SK-N-SH (cell line): ENCODE measurements at regions of chr2 and their contacts with region 1.

Region 1: DNA sequence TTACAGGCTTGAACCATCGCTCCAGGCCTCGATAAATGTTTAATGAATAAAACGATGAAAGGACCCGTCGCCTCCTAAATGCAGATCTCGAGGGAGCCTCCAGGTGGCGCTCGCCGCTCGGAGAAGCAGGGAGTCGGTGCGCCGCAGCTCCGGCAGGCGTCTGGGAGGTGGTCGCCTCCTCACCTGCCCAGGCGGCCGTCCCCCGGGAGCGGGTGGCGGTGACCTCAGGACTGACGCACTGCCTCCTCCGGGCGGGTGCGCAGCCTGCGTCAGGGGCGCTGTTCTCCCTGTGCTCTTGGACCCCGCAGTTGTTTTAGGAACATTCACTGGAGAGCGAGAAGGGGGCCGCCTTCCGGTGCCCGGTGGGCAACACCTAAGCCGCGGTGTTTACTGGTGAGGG is 38.6 kb upstream of the POLE4 start:
- DNase-seq: peak; percentile 86
- H3K4me3 ChIP-seq: peak overlapping the region; percentile 42 to 58
- H3K27ac ChIP-seq: no peak overlapping the region
- H3K4me1 ChIP-seq: no peaks in the 10 kb centered on the region; a peak in 1 of 4 replicates
- H3K27me3 ChIP-seq: no peaks in the 10 kb centered on the region
- CTCF ChIP-seq: peak; percentile 75
- EP300 ChIP-seq: no peak
- RAD21 ChIP-seq: peak; percentile 90

Region 2: DNA sequence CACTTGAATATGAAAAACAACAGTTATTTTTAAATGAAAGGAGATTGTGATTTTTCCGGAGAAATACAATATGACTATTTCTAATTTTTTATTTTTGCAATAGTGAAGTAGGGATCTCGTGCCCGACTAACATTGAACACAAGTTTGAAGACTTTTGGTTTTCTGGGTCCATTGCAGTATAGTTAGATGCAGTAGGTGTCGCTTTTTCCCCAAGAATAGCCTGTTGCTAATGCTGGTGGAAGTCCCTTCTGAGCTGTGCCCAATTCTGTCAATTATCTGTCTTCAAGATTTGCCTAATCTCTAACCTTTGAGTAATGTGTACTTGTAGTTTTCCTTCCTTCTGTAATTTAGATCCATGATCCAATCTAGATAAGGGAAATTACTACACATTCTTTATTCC is 229.3 kb before region 1 on chr2:
- CTCF ChIA-PET with region 1: interaction called, 10 read pairs
- POLR2A ChIA-PET with region 1: no interaction called
- DNase-seq: peak; percentile 68
- H3K4me3 ChIP-seq: no peak overlapping the region
- H3K27ac ChIP-seq: no peak overlapping the region
- H3K4me1 ChIP-seq: no peaks in the 10 kb centered on the region; a peak in 1 of 4 replicates
- H3K27me3 ChIP-seq: no peaks in the 10 kb centered on the region
- CTCF ChIP-seq: peak; percentile 92
- EP300 ChIP-seq: no peak
- RAD21 ChIP-seq: peak; percentile 98

Region 3: DNA sequence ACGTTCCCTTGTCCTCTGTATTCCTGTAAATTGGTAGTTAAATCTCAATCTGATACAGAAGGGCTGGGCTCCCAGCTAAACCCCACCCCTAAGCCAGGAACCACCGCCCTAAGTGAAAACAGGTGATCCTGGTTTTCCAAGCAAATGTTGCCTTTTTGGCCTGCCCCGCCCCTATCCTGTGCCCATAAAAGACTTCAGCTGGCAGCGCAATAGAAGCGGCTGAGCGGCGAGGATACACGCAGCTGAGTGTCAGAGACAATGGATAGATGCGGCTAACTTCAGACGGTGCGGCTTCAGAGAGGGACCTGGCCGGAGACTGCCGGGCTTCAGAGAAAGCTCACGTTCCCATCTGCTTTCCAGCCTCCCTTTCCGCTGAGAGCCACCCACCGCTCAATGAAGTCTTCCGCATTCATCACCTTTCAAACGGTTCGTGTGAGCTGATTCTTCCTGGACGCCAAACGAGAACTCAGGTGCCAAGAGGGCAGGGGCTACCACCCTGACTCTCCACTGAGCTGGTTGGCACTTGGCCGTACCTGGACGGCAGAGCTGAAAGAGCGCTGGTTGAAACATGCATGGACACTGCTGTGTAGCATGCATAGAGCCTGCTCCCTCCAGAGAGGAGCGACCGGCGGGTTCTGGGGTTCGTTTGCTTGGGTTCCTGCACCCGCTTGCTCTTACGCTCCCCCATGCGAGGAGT is 10.9 kb before region 1 on chr2:
- CTCF ChIA-PET with region 1: interaction called, 17 read pairs
- POLR2A ChIA-PET with region 1: no interaction called
- DNase-seq: peak; percentile 39
- H3K4me3 ChIP-seq: 0 out of 4 replicates have a peak overlapping the region, but pooled peaks of 1 of the 2 experiments have one; percentile 9
- H3K27ac ChIP-seq: no peak overlapping the region
- H3K4me1 ChIP-seq: peaks cover 0 to 6% of the 10 kb centered on the region in 2 experiments; a peak in 1 of 4 replicates
- H3K27me3 ChIP-seq: no peaks in the 10 kb centered on the region; the same call in 1 of the 2 replicates
- CTCF ChIP-seq: no peak
- EP300 ChIP-seq: no peak
- RAD21 ChIP-seq: no peak

Region 4: DNA sequence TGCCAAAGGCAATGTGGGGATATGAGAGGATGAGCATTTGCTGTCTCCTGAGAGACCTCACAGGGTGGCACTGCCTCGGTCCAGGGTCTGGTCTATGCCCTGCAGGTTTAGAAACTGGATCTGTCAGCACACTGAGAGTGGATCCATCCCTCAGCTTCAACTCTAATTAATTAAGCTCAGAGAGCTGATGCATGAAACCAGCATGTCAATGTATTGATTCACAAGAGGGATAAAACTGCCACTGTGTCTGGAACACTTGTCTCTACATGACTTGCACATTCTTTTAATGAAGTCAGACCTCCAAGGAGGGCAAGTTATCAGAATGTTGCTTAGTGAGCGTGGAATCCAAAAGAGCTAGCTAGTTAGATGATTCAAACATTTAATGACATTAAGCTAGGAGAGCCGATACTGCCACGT is 16.2 kb after region 1 on chr2:
- CTCF ChIA-PET with region 1: interaction called, 12 read pairs
- POLR2A ChIA-PET with region 1: no interaction called
- DNase-seq: no peak
- H3K4me3 ChIP-seq: no peak overlapping the region
- H3K27ac ChIP-seq: no peak overlapping the region
- H3K4me1 ChIP-seq: no peaks in the 10 kb centered on the region; a peak in 1 of 4 replicates
- H3K27me3 ChIP-seq: no peaks in the 10 kb centered on the region
- CTCF ChIP-seq: no peak
- EP300 ChIP-seq: no peak
- RAD21 ChIP-seq: no peak

Region 5: DNA sequence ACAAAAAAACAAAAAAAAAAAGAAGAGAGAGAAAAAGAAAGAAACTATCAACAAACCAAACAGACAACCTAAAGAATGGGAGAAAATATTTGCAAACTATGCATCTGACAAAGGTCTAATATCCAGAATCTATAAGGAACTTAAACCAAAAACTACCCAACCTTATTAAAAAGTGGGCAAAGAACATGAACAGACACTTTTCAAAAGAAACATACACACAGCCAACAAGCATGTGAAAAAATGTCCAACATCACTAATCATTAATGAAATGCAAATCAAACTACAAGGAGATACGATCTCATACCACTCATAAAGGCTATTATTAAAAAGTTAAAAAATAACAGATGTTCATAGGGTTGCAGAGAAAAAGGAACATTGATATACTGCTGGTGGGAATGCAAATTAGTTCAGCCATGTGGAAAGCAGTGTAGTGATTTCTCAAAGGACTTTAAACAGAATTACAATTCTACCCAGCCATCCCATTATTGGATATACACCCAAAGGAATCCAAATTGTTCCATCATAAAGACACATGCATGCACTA is 31.5 kb after region 1 on chr2:
- CTCF ChIA-PET with region 1: no interaction called
- POLR2A ChIA-PET with region 1: no interaction called
- DNase-seq: no peak
- H3K4me3 ChIP-seq: no peak overlapping the region
- H3K27ac ChIP-seq: no peak overlapping the region
- H3K4me1 ChIP-seq: no peaks in the 10 kb centered on the region
- H3K27me3 ChIP-seq: no peaks in the 10 kb centered on the region
- CTCF ChIP-seq: no peak
- EP300 ChIP-seq: no peak
- RAD21 ChIP-seq: no peak

Region 6: GRCh38 chr2:75003773-75004172 is 83.9 kb after region 1 on chr2:
- CTCF ChIA-PET with region 1: interaction called, 13 read pairs
- POLR2A ChIA-PET with region 1: no interaction called
- DNase-seq: no peak
- H3K4me3 ChIP-seq: no peak overlapping the region
- H3K27ac ChIP-seq: no peak overlapping the region
- H3K4me1 ChIP-seq: peaks cover 0 to 3% of the 10 kb centered on the region in 2 experiments; a peak in 1 of 4 replicates
- H3K27me3 ChIP-seq: no peaks in the 10 kb centered on the region
- CTCF ChIP-seq: no peak
- EP300 ChIP-seq: no peak
- RAD21 ChIP-seq: no peak

Region 7: GRCh38 chr2:75064691-75065396 is 145.0 kb after region 1 on chr2:
- CTCF ChIA-PET with region 1: interaction called, 15 read pairs
- POLR2A ChIA-PET with region 1: no interaction called
- DNase-seq: peak; percentile 63
- H3K4me3 ChIP-seq: no peak overlapping the region; a peak in 1 of 4 replicates
- H3K27ac ChIP-seq: no peak overlapping the region
- H3K4me1 ChIP-seq: no peaks in the 10 kb centered on the region
- H3K27me3 ChIP-seq: no peaks in the 10 kb centered on the region; the same call in 1 of the 2 replicates
- CTCF ChIP-seq: peak; percentile 81
- EP300 ChIP-seq: no peak
- RAD21 ChIP-seq: peak; percentile 68

Region 8: GRCh38 chr2:75098856-75099255 is 179.0 kb after region 1 on chr2:
- CTCF ChIA-PET with region 1: no interaction called
- POLR2A ChIA-PET with region 1: no interaction called
- DNase-seq: peak; percentile 14
- H3K4me3 ChIP-seq: no peak overlapping the region
- H3K27ac ChIP-seq: no peak overlapping the region
- H3K4me1 ChIP-seq: peaks cover 8% of the 10 kb centered on the region in 2 experiments; a peak in 3 of 4 replicates
- H3K27me3 ChIP-seq: peaks cover 7% of the 10 kb centered on the region
- CTCF ChIP-seq: peak; percentile 63
- EP300 ChIP-seq: no peak
- RAD21 ChIP-seq: peak; percentile 56

Region 9: GRCh38 chr2:75751360-75751759 is 831.5 kb after region 1 on chr2:
- CTCF ChIA-PET with region 1: no interaction called
- POLR2A ChIA-PET with region 1: no interaction called
- DNase-seq: no peak
- H3K4me3 ChIP-seq: no peak overlapping the region
- H3K27ac ChIP-seq: no peak overlapping the region
- H3K4me1 ChIP-seq: no peaks in the 10 kb centered on the region
- H3K27me3 ChIP-seq: no peaks in the 10 kb centered on the region
- CTCF ChIP-seq: no peak
- EP300 ChIP-seq: no peak
- RAD21 ChIP-seq: no peak